K562 (cell line): ENCODE measurements at regions of chr9 and their contacts with region 1.

Region 1: DNA sequence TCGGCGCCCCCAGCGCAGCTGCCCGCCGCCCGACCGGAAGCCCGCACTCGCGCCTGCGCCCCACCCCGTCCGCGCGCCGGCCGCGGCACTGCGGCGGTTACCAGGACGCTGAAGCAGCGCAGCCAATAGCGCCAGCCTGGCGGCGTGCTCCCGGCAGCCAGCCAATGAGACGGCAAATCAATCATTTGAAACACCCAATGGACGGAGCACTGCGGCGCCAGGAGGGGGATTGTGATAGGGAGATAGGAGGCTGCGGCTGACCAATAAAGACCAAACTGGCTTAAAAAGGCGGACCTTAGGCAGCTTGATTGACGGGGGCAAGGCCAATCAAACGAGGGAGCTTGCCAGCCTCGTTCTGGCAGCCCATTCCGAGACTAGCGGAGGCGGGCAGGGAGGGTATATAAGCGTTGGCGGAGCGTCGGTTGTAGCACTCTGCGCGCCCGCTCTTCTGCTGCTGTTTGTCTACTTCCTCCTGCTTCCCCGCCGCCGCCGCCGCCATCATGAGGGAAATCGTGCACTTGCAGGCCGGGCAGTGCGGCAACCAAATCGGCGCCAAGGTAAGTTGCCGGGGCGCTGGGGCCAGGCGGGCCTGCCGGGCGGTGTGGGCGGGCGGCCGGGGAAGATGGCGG is at the start of gene TUBB4B:
- DNase-seq: peak; percentile 88 to 100 (median 94)
- ATAC-seq: peak; percentile 80
- H3K4me3 ChIP-seq: peak within 1 kb of the TSS; percentile 96
- H3K27ac ChIP-seq: peak within 1 kb of the TSS; percentile 98
- H3K4me1 ChIP-seq: peaks cover 33 to 91% of the 10 kb centered on the region in 2 experiments
- H3K27me3 ChIP-seq: no peaks in the 10 kb centered on the region
- CTCF ChIP-seq: no peak; a peak in 1 of 6 replicates
- EP300 ChIP-seq: no peak; the same call in none of the 2 replicates
- POLR2A ChIP-seq: peak; percentile 100
- RAD21 ChIP-seq: 0 out of 4 replicates have a peak, but pooled peaks of 1 of the 2 experiments have one; percentile 4
- polyA plus RNA-seq, gene TUBB4B: 24.1 to 51.3 TPM

Region 2: GRCh38 chr9:136985027-136985602 is 255.9 kb before region 1 on chr9:
- CTCF ChIA-PET with region 1: no interaction called
- POLR2A ChIA-PET with region 1: no interaction called
- in situ Hi-C with region 1: no loop called
- intact Hi-C with region 1: no loop called
- DNase-seq: no peak
- ATAC-seq: no peak
- H3K4me3 ChIP-seq: no peak overlapping the region
- H3K27ac ChIP-seq: no peak overlapping the region
- H3K4me1 ChIP-seq: peaks cover 3 to 56% of the 10 kb centered on the region in 2 experiments; a peak in 4 of 5 replicates
- H3K27me3 ChIP-seq: no peaks in the 10 kb centered on the region
- CTCF ChIP-seq: no peak
- EP300 ChIP-seq: no peak
- POLR2A ChIP-seq: no peak
- RAD21 ChIP-seq: no peak

Region 3: DNA sequence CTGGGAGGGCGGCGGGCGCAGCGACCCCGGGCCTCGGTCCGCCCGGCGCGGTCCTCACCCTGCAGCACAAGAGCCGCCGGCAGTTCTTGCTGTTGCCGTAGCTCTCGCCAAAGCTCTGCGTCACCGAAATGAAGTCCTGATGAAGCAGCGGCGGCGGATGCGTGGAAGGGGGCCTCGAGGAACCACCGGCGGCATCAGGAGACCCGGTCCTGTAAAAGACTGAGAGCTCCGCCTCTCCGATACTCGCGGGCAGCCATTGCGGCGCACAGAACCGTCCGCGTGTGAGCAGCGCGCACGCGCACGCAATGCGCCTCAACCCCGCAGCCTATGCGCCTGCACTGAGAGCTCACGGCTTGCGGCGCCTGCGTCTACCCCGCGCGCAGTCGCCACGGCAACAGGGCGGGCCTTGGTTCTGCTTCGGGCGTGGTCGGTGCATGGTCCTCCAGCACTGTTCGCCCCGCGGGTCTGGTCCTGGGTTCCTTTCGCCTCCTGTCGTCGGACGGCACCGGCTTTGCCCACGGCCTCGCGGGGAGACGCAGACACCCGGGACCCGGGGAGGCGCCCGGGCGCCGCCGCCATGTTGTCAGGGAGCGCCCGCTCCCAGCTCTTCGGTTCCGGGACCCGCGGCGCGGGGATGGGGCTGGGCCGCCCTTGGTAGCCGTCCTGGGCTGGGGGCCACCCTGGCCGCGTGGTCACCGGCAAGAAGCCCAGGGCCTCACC is 111.4 kb before region 1 on chr9:
- CTCF ChIA-PET with region 1: no interaction called
- POLR2A ChIA-PET with region 1: interaction called, 23 read pairs
- in situ Hi-C with region 1: no loop called
- intact Hi-C with region 1: no loop called
- DNase-seq: peak; percentile 88 to 97 (median 90)
- ATAC-seq: peak; percentile 95
- H3K4me3 ChIP-seq: peak overlapping the region; percentile 91
- H3K27ac ChIP-seq: peak overlapping the region; percentile 78
- H3K4me1 ChIP-seq: peaks cover 12 to 37% of the 10 kb centered on the region in 2 experiments; a peak in 4 of 5 replicates
- H3K27me3 ChIP-seq: no peaks in the 10 kb centered on the region
- CTCF ChIP-seq: peak in 1 of 3 experiments; percentile 20; a peak in 2 of 6 replicates
- EP300 ChIP-seq: no peak
- POLR2A ChIP-seq: peak; percentile 88
- RAD21 ChIP-seq: no peak

Region 4: GRCh38 chr9:137176302-137177182 is 64.4 kb before region 1 on chr9:
- CTCF ChIA-PET with region 1: no interaction called
- POLR2A ChIA-PET with region 1: interaction called, 10 read pairs
- in situ Hi-C with region 1: no loop called
- intact Hi-C with region 1: no loop called
- DNase-seq: peak; percentile 49 to 73 (median 62)
- ATAC-seq: peak; percentile 88
- H3K4me3 ChIP-seq: no peak overlapping the region
- H3K27ac ChIP-seq: no peak overlapping the region
- H3K4me1 ChIP-seq: peaks cover 3 to 81% of the 10 kb centered on the region in 2 experiments; a peak in 3 of 5 replicates
- H3K27me3 ChIP-seq: no peaks in the 10 kb centered on the region
- CTCF ChIP-seq: peak; percentile 73 to 82 (median 82)
- EP300 ChIP-seq: no peak
- POLR2A ChIP-seq: no peak
- RAD21 ChIP-seq: peak; percentile 12 to 56; a peak in 2 of 4 replicates

Region 5: DNA sequence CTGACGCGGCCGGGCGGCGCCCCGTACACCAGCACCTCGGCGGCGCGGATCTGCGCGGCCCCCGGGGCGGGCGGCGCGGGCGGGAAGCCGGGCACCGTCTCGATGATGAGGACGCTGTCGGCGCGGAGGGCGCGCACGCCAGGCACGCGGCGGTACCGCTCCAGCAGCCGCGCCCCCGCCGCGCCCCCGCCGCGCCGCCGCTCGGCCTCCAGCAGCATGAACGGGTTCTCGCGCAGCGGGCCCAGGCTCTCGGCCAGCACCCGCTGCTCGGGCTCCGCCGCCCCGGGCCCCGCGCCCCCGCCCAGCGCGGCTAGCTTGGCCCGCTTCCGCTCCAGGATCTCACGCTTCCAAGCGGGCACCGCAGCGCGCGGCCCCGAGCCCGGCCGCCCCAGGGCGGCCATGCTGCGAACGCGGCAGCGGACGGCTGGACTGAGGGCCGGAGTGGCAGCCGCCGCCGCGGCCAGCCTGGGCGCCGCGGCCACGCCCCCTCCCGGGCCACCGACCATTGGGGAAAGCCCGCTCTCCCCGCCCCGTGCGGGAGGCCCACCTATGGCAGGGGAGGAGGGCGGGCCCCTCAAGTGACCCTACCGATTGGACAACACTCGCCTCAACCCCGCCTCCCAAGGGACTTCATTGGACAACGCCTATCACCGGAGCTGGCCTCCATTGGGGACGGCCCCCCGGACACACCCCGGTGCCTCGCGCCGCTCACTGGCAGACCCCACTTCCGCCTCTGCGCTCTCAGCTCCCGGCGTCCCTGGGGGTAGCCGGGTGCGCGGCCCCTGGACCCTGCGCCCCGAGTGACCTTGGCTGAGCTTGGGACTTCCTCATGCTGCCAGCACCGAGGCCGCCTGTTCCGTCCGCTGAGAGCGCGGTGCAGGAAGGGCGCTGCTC is 40.4 kb before region 1 on chr9 and contains the start of gene TPRN:
- CTCF ChIA-PET with region 1: no interaction called
- POLR2A ChIA-PET with region 1: interaction called, 10 read pairs
- in situ Hi-C with region 1: no loop called
- intact Hi-C with region 1: no loop called
- DNase-seq: peak; percentile 99 to 100 (median 100)
- ATAC-seq: peak; percentile 96
- H3K4me3 ChIP-seq: peak within 1 kb of the TSS; percentile 52
- H3K27ac ChIP-seq: peak within 1 kb of the TSS; percentile 75
- H3K4me1 ChIP-seq: peaks cover 31 to 86% of the 10 kb centered on the region in 2 experiments
- H3K27me3 ChIP-seq: no peaks in the 10 kb centered on the region
- CTCF ChIP-seq: no peak
- EP300 ChIP-seq: no peak
- POLR2A ChIP-seq: peak; percentile 88
- RAD21 ChIP-seq: no peak
- polyA plus RNA-seq, gene TPRN: 0.31 to 0.34 TPM

Region 6: DNA sequence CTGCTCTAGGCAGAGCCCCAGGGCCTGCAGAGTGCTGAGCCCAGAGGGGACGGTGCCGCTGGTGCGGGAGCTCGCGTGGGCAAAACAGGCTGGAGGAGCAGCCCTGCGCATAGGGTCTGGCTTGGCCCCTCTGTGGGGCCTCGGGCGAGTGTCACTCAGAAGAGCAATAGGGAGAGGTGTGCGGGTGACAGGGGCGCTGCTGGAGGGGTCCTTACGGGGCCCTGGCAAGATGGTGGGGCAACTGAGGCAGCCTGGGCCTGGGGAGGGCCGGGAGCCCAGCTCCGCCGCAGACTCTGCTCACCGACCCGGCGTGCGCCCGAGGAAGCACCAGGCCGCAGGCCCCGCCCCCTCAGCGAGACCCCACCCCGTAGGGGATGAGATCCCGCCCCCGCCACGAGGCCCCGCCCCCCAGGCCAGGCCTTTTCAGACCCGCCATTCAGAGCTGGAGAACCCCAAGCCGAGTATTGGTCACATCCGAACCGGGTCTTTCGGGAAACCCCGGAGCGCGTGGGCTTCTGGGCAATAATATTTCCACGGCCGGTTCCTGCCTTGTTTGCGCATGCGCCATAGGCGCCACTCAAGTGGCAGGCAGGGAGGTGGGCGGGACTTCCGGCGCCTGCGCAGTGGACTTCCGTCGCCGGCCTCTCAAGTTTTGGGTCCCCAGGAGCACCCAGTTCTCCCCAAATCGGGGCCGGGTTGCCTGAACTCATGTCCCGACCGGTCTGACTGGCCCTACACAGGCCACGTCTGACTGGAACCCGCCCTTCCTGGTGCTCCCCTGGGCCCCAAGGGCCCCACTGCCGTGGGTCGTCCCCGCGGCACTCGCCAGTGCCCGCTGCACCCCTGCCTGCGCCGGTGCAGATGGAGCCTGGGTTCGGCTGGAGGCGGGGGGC is 17.7 kb before region 1 on chr9:
- CTCF ChIA-PET with region 1: no interaction called
- POLR2A ChIA-PET with region 1: interaction called, 13 read pairs
- in situ Hi-C with region 1: no loop called
- intact Hi-C with region 1: no loop called
- DNase-seq: peak; percentile 94 to 99 (median 96)
- ATAC-seq: peak; percentile 84
- H3K4me3 ChIP-seq: peak overlapping the region; percentile 85
- H3K27ac ChIP-seq: peak overlapping the region; percentile 83
- H3K4me1 ChIP-seq: peaks cover 28 to 95% of the 10 kb centered on the region in 2 experiments
- H3K27me3 ChIP-seq: no peaks in the 10 kb centered on the region
- CTCF ChIP-seq: no peak
- EP300 ChIP-seq: no peak; the same call in 1 of the 2 replicates
- POLR2A ChIP-seq: peak; percentile 89
- RAD21 ChIP-seq: no peak

Region 7: DNA sequence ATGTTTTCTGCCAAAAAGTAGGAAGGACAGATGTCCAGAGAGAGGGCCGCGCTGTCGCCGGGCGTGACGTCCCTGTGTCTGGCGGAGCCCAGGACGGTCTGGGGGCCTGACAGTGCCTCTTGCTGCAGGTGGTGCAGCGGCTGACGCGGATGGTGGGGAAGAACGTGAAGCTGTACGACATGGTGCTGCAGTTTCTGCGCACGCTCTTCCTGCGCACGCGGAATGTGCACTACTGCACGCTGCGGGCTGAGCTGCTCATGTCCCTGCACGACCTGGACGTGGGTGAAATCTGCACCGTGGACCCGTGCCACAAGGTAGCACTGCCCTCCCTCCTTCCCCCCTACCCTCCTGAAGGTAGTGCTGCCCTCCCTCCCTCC is 21.9 kb after region 1 on chr9:
- CTCF ChIA-PET with region 1: no interaction called
- POLR2A ChIA-PET with region 1: interaction called, 221 read pairs
- in situ Hi-C with region 1: no loop called
- intact Hi-C with region 1: no loop called
- DNase-seq: no peak
- ATAC-seq: peak; percentile 20; the same call in 2 of the 3 replicates
- H3K4me3 ChIP-seq: no peak overlapping the region
- H3K27ac ChIP-seq: no peak overlapping the region; the same call in 2 of the 3 replicates
- H3K4me1 ChIP-seq: peaks cover 2 to 33% of the 10 kb centered on the region in 2 experiments; a peak in 4 of 5 replicates
- H3K27me3 ChIP-seq: no peaks in the 10 kb centered on the region
- CTCF ChIP-seq: no peak
- EP300 ChIP-seq: no peak
- POLR2A ChIP-seq: no peak; the same call in 1 of the 2 replicates
- RAD21 ChIP-seq: no peak

Region 8: DNA sequence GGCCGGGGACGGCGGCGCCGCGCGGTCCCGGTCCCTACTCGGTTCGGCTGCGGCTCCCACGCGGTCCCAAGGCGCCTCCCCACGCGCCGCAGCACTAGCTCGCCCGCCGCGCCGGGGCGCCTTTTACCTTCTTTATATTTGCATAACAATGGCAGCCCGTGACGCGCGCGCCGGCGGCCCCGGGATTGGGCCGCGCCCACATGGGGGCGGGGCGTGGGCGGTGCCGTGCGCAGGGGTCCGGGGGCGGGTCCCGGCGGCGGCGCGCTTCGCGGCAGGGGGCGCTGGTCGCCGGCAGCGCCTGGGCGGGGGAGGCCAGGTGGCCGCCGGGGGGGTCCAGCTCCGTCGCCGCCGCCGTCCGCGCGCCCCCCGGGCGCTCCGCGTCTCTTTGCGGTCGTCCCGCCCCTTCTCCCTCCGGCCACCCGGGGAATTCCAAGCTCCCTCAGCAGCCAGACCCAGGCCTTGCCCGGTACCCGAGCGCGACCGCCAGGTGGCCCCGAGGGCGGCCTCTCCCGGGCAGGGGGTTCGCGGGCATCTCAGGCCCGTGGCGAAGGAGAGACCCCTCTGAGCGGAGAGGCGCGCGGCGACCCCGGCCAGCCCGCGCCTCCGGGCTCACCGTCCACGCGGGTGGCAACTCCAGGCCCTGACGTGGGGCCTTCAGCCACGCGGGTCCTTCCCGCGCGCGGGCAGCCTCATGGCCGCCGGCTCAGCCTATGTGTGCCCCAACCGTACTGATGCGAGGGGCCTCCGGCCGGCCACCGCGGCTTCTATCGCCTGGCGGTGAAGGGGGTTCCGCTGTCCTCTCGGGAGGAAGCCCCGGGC is 61.4 kb after region 1 on chr9 and contains the start of gene NRARP:
- CTCF ChIA-PET with region 1: no interaction called
- POLR2A ChIA-PET with region 1: interaction called, 7 read pairs
- in situ Hi-C with region 1: no loop called
- intact Hi-C with region 1: loop called (anchors 5 kb)
- DNase-seq: peak; percentile 94 to 96 (median 95)
- ATAC-seq: peak; percentile 64
- H3K4me3 ChIP-seq: peak within 1 kb of the TSS; percentile 90
- H3K27ac ChIP-seq: peak within 1 kb of the TSS; percentile 88
- H3K4me1 ChIP-seq: peaks cover 27 to 84% of the 10 kb centered on the region in 2 experiments
- H3K27me3 ChIP-seq: no peaks in the 10 kb centered on the region
- CTCF ChIP-seq: peak; percentile 48 to 65 (median 61); a peak in 5 of 6 replicates
- EP300 ChIP-seq: no peak
- POLR2A ChIP-seq: peak; percentile 49; the same call in 1 of the 2 replicates
- RAD21 ChIP-seq: 0 out of 4 replicates have a peak, but pooled peaks of 1 of the 2 experiments have one; percentile 27
- polyA plus RNA-seq, gene NRARP: not detected

Region 9: GRCh38 chr9:137313956-137314560 is 73.1 kb after region 1 on chr9:
- CTCF ChIA-PET with region 1: no interaction called
- POLR2A ChIA-PET with region 1: no interaction called
- in situ Hi-C with region 1: no loop called
- intact Hi-C with region 1: no loop called
- DNase-seq: peak in 1 of 4 experiments; percentile 10
- ATAC-seq: no peak
- H3K4me3 ChIP-seq: no peak overlapping the region
- H3K27ac ChIP-seq: no peak overlapping the region
- H3K4me1 ChIP-seq: peaks cover 16 to 96% of the 10 kb centered on the region in 2 experiments
- H3K27me3 ChIP-seq: no peaks in the 10 kb centered on the region
- CTCF ChIP-seq: no peak
- EP300 ChIP-seq: no peak
- POLR2A ChIP-seq: no peak
- RAD21 ChIP-seq: no peak